ENCODE measurements at regions of chr9 and their contacts with region 1.

Region 1: DNA sequence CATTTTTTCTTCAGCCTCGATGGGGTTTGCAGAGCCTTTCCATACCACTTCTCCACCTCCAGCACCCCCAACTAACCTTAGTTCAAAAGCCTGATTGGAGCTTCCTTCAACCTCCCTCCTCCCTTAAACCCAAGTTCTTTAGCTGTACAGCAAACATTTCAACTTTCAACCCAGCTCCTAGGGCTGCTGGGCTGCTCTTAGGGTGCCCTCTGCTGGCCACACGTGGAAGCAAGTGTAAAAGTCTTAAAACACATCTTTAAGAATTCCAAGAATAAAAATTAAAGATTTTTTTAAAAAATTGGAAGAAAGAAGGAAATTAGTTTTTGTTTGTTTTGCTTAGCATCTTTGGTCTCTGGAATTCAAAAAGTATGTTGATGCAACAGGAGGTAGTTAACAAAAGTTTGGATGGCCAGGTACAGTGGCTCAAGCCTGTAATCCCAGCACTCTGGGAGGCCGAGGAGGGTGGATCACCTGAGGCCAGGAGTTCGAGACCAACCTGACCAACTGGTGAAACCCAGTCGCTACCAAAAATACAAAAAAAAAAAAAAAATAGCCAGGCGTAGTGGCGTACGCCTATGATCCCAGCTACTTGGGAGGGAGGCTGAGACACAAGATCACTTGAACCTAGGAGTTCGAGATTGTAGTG is 15.5 kb upstream of the HSD17B3 start:
- DNase-seq: peak; percentile 52
- H3K4me3 Mint-ChIP-seq: no peak overlapping the region
- H3K27ac Mint-ChIP-seq: no peak overlapping the region
- H3K4me1 Mint-ChIP-seq: no peaks in the 10 kb centered on the region
- H3K27me3 Mint-ChIP-seq: no peaks in the 10 kb centered on the region
- CTCF ChIP-seq: peak; percentile 53

Region 2: DNA sequence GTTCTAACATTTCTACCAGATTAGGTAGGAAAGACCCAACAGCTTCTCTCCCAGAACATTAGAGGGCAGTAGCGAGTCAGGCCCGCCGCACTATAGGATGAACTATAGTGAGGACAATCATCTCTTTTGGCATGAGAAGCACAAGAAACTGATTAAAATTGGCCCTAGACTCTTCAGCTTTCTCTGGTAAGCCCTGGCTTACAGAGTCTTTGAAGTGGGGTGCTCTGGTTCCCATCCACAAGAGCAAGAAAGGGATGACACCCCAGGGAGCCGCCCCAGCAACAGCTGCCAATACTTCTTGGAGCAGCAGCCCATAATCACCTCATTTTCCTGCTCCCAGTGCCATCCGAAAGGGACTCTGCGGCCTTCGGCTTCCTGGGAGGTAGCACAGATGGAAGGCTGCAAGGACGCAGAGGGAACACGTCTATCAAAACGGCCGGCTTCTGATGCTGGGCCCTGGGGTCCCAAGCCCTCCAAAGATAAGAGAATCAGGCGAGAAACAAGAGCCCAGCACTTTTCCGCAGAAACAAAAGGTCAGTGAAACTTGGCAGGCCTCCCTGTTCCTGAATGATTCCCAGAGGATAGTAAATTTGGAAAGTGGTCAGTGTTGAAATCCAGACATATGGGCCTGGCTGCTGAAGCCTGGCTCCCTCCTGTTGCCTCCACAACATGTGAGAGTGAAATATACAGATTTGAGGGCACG is 84.8 kb before region 1 on chr9:
- CTCF ChIA-PET with region 1: interaction called, 19 read pairs
- intact Hi-C with region 1: loop called (anchors 1 kb)
- DNase-seq: peak; percentile 13
- H3K4me3 Mint-ChIP-seq: no peak overlapping the region
- H3K27ac Mint-ChIP-seq: no peak overlapping the region
- H3K4me1 Mint-ChIP-seq: no peaks in the 10 kb centered on the region
- H3K27me3 Mint-ChIP-seq: peaks cover 9% of the 10 kb centered on the region
- CTCF ChIP-seq: peak; percentile 67